ENCODE measurements at regions of chr4 and their contacts with region 1.

Region 1: GRCh38 chr4:85798012-85798770 is 323.2 kb downstream of the ARHGAP24 start:
- DNase-seq: no peak
- ATAC-seq: no peak
- H3K4me3 ChIP-seq: no peak overlapping the region
- H3K4me1 ChIP-seq: no peaks in the 10 kb centered on the region
- CTCF ChIP-seq: no peak

Region 2: GRCh38 chr4:85826060-85826678 is 28.0 kb after region 1 on chr4:
- intact Hi-C with region 1: no loop called
- DNase-seq: peak in 1 of 3 donors; percentile 41
- ATAC-seq: peak; percentile 76
- H3K4me3 ChIP-seq: no peak overlapping the region
- H3K4me1 ChIP-seq: peaks cover 11% of the 10 kb centered on the region
- CTCF ChIP-seq: no peak

Region 3: GRCh38 chr4:85968945-85969819 is 171.0 kb after region 1 on chr4:
- intact Hi-C with region 1: loop called in 1 of 2 experiments (anchors 5 kb)
- DNase-seq: peak in 1 of 3 donors; percentile 11
- ATAC-seq: peak; percentile 52
- H3K4me3 ChIP-seq: no peak overlapping the region
- H3K4me1 ChIP-seq: no peaks in the 10 kb centered on the region
- CTCF ChIP-seq: no peak

Region 4: GRCh38 chr4:86043755-86044592 is 245.8 kb after region 1 on chr4:
- intact Hi-C with region 1: loop called in 1 of 2 experiments (anchors 5 kb)
- DNase-seq: peak in 1 of 3 donors; percentile 56
- ATAC-seq: peak; percentile 38
- H3K4me3 ChIP-seq: no peak overlapping the region
- H3K4me1 ChIP-seq: no peaks in the 10 kb centered on the region
- CTCF ChIP-seq: no peak

Measured in mucosa of descending colon (tissue), 3 donors.